AG04450 (cell line): ENCODE measurements at regions of chr5 and their contacts with region 1.

Region 1: GRCh38 chr5:122101636-122102285 is 23.7 kb upstream of the LOX start:
- DNase-seq: no peak
- H3K4me3 ChIP-seq: no peak overlapping the region
- H3K27ac ChIP-seq: no peak overlapping the region
- H3K27me3 ChIP-seq: no peaks in the 10 kb centered on the region
- CTCF ChIP-seq: peak; percentile 67

Region 2: DNA sequence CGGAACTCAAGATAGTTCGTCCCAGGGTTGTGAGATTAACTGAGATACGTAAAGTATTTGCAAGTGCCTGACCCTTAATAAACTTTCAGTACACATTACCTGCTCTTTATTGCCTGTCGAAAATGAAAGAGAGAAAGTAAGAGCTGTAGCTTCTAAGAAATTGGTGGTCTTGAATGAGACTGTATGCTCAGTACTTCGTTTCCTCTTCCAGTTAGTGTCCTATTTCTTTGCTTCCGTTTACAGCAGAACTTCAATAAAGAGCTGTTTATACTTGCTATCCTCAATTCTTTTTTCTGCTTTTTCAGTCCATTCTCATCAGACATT is 139.5 kb before region 1 on chr5:
- CTCF ChIA-PET with region 1: interaction called, 46 read pairs
- POLR2A ChIA-PET with region 1: no interaction called
- DNase-seq: no peak
- H3K4me3 ChIP-seq: peak overlapping the region; percentile 93
- H3K27ac ChIP-seq: peak overlapping the region; percentile 76
- H3K27me3 ChIP-seq: no peaks in the 10 kb centered on the region
- CTCF ChIP-seq: no peak

Region 3: GRCh38 chr5:121968910-121969607 is 132.7 kb before region 1 on chr5:
- CTCF ChIA-PET with region 1: interaction called, 46 read pairs
- POLR2A ChIA-PET with region 1: interaction called, 4 read pairs
- DNase-seq: peak; percentile 98
- H3K4me3 ChIP-seq: peak overlapping the region; percentile 36
- H3K27ac ChIP-seq: peak overlapping the region; percentile 86
- H3K27me3 ChIP-seq: no peaks in the 10 kb centered on the region
- CTCF ChIP-seq: no peak

Region 4: DNA sequence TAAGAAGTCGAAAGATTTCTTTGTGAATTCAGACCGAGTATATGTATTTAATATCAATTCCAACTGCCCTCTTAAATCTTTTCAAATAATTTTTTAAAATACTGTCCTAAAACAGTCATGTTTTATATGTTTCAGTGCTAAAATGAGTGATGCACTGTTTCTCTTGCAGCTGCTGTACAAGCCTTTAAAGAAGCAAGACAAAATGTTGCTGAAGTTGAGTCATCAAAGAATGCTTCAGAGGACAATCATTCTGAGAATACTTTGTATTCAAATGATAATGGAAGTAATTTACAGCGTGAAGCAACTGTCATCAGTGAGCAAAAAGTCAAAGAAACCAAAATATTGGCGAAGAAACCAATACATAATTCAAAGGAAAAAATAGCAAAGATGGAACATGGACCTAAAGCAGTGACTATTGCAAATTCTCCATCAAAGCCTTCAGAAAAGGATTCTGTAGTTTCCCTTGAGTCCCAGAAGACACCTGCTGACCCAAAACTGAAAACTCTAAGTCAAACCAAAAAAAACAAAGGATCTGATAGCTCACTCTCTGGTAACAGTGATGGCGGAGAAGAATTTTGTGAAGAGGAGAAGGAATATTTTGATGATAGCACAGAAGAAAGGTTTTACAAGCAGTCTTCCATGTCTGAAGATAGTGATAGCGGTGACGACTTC is 81.7 kb before region 1 on chr5:
- CTCF ChIA-PET with region 1: interaction called, 3 read pairs
- POLR2A ChIA-PET with region 1: interaction called, 12 read pairs
- DNase-seq: no peak
- H3K4me3 ChIP-seq: no peak overlapping the region
- H3K27ac ChIP-seq: no peak overlapping the region
- H3K27me3 ChIP-seq: no peaks in the 10 kb centered on the region
- CTCF ChIP-seq: no peak

Region 5: GRCh38 chr5:122040636-122041302 is 61.0 kb before region 1 on chr5:
- CTCF ChIA-PET with region 1: no interaction called
- POLR2A ChIA-PET with region 1: no interaction called
- DNase-seq: no peak
- H3K4me3 ChIP-seq: no peak overlapping the region
- H3K27ac ChIP-seq: no peak overlapping the region
- H3K27me3 ChIP-seq: no peaks in the 10 kb centered on the region
- CTCF ChIP-seq: no peak

Region 6: GRCh38 chr5:122126177-122126755 is 24.5 kb after region 1 on chr5:
- CTCF ChIA-PET with region 1: interaction called, 16 read pairs
- POLR2A ChIA-PET with region 1: interaction called, 6 read pairs
- DNase-seq: peak; percentile 59
- H3K4me3 ChIP-seq: peak overlapping the region; percentile 51; the same call in 1 of the 2 replicates
- H3K27ac ChIP-seq: no peak overlapping the region
- H3K27me3 ChIP-seq: no peaks in the 10 kb centered on the region
- CTCF ChIP-seq: no peak

Region 7: GRCh38 chr5:122332589-122333555 is 231.1 kb after region 1 on chr5:
- CTCF ChIA-PET with region 1: no interaction called
- POLR2A ChIA-PET with region 1: no interaction called
- DNase-seq: no peak
- H3K4me3 ChIP-seq: no peak overlapping the region
- H3K27ac ChIP-seq: no peak overlapping the region
- H3K27me3 ChIP-seq: no peaks in the 10 kb centered on the region
- CTCF ChIP-seq: no peak